Activated CD4-positive, alpha-beta T cell treated with anti-CD3 and anti-CD28 coated beads for 36 hours (primary cell): ENCODE measurements at regions of chr12 and their contacts with region 1.

Region 1: GRCh38 chr12:12837025-12837872 is 24.1 kb downstream of the DDX47 start:
- DNase-seq: peak; percentile 76
- ATAC-seq: peak; percentile 95
- H3K4me3 Mint-ChIP-seq: no peak overlapping the region
- H3K27ac Mint-ChIP-seq: peak overlapping the region; percentile 77
- H3K4me1 Mint-ChIP-seq: peaks cover 44% of the 10 kb centered on the region
- H3K27me3 Mint-ChIP-seq: no peaks in the 10 kb centered on the region

Region 2: GRCh38 chr12:12813120-12814101 is 23.8 kb before region 1 on chr12 and contains the start of gene DDX47:
- CTCF ChIA-PET with region 1: interaction called, 16 read pairs
- POLR2A ChIA-PET with region 1: no interaction called
- intact Hi-C with region 1: no loop called
- DNase-seq: peak; percentile 99
- ATAC-seq: peak; percentile 90
- H3K4me3 Mint-ChIP-seq: peak within 1 kb of the TSS; percentile 95
- H3K27ac Mint-ChIP-seq: peak within 1 kb of the TSS; percentile 91
- H3K4me1 Mint-ChIP-seq: peaks cover 61% of the 10 kb centered on the region
- H3K27me3 Mint-ChIP-seq: no peaks in the 10 kb centered on the region
- total RNA-seq, gene DDX47: 91.3 to 91.9 TPM

Region 3: GRCh38 chr12:12821975-12822374 is 15.3 kb before region 1 on chr12:
- CTCF ChIA-PET with region 1: interaction called, 11 read pairs
- POLR2A ChIA-PET with region 1: interaction called, 3 read pairs
- intact Hi-C with region 1: no loop called
- DNase-seq: no peak
- ATAC-seq: no peak
- H3K4me3 Mint-ChIP-seq: no peak overlapping the region
- H3K27ac Mint-ChIP-seq: no peak overlapping the region
- H3K4me1 Mint-ChIP-seq: peaks cover 38% of the 10 kb centered on the region
- H3K27me3 Mint-ChIP-seq: no peaks in the 10 kb centered on the region

Region 4: DNA sequence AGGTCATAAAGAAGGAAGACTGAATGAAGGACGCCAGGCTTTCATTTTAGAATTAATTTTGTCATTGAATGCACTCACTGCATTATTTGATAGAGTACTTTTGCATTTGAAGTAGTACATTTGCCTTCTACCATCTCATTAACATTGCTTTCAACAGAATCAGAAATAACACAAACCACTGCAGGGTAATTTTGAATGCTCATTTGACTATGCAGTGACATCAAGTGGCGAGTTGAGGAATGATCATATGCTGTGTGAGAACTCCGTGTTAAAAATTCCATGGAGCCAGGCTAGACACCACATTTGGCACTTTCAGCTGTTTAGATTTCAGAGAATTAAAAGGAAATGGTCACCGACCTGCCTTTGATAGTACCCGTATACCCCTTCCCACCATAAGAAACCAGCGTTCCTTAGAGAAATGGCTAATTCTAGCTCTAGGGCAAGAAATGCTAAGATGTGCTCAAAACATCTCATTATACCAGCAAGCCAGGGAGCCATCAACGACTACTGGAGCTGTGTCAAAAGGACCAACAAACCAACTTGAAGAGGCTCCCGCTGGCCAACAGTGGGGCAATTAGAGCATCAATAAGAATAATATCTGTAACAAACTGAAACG is 146.3 kb after region 1 on chr12:
- CTCF ChIA-PET with region 1: interaction called, 4 read pairs
- POLR2A ChIA-PET with region 1: no interaction called
- intact Hi-C with region 1: loop called (anchors 2 kb)
- DNase-seq: peak; percentile 16
- ATAC-seq: no peak
- H3K4me3 Mint-ChIP-seq: no peak overlapping the region
- H3K27ac Mint-ChIP-seq: no peak overlapping the region
- H3K4me1 Mint-ChIP-seq: no peaks in the 10 kb centered on the region
- H3K27me3 Mint-ChIP-seq: no peaks in the 10 kb centered on the region

Region 5: DNA sequence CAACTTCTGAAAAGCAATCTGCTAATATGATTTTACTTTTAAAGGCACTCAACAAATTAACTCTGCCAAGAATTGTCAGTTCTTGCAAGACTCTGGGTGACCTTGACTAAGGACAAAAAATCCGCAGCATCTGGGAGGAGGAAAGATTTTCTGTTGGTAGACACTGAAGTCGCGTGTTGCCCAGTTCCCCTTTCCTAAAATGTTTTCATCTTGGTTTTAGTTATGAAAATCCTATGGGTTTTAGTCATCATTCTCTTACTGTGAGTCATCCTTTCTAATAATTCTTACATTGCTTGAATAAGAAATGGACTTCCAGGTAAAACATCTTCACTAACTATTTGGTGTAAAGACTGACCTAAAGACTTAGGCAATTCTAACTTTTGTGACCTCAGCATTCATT is 257.1 kb after region 1 on chr12:
- CTCF ChIA-PET with region 1: no interaction called
- POLR2A ChIA-PET with region 1: no interaction called
- intact Hi-C with region 1: loop called in 1 of 2 experiments (anchors 1 kb)
- DNase-seq: no peak
- ATAC-seq: no peak
- H3K4me3 Mint-ChIP-seq: no peak overlapping the region
- H3K27ac Mint-ChIP-seq: no peak overlapping the region
- H3K4me1 Mint-ChIP-seq: peaks cover 26% of the 10 kb centered on the region
- H3K27me3 Mint-ChIP-seq: no peaks in the 10 kb centered on the region